Right ventricle myocardium inferior (tissue), 1 donor: ENCODE measurements at regions of chr16 and their contacts with region 1.

Region 1: DNA sequence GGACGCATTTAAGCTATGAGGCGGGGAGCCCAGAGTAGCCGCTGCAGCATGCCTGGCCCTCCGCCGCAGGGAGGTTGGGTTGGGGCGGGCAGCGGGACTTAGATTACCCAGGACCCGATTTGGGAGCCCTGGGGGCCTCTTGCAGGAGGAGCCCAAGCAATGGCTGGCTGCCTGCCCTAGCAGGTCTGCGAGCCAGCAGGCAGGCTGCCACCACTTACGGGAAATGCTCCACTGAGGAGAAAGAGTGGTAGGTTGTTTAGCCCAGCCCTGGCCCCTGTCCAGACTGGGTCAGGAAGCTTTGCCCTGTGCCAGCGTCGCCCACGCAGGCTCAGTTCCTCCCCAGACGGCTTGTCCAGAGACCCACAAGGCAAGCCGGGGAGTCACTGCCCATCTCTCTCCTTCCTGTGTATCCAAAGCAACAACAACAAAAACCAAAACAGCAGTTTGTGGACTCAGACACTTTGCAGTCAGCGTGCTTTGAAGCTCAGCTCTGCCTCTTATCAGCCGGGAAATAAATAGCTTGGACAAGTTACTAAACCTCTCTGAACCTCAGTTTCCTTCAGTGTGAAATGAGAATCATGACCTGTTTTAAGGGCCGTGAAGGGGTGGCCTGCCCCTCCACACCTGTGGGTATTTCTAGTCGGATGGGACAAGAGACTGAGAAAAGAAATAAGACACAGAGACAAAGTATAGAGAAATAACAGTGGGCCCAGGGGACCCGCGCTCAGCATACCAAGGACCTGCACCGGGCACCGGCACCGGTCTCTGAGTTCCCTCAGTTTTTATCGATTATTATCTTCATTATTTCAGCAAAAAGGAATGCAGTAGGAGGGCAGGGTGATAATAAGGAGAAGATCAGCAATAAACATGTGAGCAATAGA is 10.5 kb upstream of the TVP23A start:
- DNase-seq: peak; percentile 96
- ATAC-seq: peak; percentile 84

Region 2: GRCh38 chr16:9372934-9373890 is 1455.9 kb before region 1 on chr16:
- intact Hi-C with region 1: loop called (anchors 10 kb)
- DNase-seq: no peak
- ATAC-seq: no peak

Region 3: DNA sequence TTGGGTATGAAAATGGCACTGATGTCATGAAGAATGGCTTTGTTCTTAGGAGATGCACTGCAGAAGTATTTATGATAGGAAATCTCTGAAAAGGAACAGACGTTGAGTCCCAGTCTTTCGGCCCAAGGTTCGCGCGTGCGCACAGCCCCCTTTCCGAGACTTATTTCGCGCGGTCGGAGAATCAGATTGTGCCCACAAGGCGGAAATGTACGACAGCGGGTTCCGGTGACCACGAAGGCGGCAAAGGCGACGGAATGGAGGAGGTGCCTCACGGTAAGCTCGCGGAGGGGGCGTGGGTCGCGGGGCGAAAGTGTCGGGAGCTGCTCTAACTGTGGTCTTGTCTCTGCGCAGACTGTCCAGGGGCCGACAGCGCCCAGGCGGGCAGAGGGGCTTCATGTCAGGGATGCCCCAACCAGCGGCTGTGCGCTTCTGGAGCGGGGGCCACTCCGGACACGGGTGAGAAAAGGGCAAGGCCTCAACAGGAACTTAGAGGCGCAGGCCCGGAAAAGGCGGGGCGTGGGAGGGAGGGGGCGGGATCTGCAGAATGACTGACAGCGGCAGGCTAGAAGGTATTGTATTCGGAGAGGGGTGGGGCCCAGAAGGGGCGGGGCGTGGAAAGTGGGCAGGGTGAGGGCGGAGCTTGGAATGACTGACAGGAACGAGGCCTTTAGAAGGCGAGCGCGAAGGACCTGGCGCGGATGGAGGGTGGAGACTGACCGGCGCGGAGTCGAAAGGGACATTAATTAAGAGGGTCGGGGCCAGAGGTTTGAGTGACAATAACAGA is 85.3 kb before region 1 on chr16 and contains the start of gene NUBP1:
- intact Hi-C with region 1: loop called (anchors 1 kb)
- DNase-seq: peak; percentile 99
- ATAC-seq: peak; percentile 97
- total RNA-seq, gene NUBP1: 50.4 TPM

Region 4: GRCh38 chr16:10770907-10771306 is 58.2 kb before region 1 on chr16:
- intact Hi-C with region 1: loop called (anchors 5 kb)
- DNase-seq: no peak
- ATAC-seq: no peak

Region 5: DNA sequence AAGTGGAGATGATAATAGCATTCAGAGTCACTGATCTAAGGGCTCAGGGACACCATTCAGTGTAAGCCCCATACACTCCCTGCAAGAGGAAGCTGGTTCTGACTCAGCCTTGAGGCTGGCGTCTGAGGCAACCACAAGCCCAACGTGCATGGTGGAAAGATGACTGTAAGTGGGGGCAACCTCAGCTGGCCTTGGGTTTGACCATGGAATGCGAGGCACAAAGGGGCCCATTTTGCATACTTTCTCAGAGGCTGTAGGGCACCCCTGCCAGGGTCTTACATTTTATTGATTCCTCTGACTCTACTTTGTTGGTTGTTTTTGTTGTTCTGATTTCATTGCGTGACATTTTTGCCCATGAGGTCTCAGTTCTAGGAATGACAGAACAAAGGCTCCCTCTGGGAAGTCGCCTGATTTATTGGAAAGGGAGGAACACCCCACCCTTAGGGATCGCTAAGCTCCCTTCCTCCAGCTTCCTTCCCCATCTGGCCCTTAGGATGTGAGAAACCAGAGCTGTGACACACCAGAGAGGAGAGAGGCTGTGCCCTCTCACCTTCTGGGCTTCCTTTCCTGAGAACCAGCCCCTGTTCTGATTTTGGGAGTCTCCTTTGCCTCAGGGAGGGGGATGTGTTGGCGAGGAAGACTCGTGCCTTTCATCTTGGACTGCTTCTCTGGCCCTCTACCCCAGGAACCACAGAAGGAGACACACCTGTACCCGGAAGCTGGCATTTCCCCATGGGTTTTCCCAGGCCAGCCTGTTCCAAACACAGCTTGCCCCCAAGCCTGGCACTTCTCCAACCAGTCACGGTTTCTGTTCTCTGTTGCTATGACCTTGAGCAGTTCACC is 42.3 kb after region 1 on chr16:
- intact Hi-C with region 1: loop called (anchors 2 kb)
- DNase-seq: peak; percentile 84
- ATAC-seq: peak; percentile 51

Region 6: GRCh38 chr16:10885246-10885645 is 56.2 kb after region 1 on chr16:
- intact Hi-C with region 1: no loop called
- DNase-seq: no peak
- ATAC-seq: no peak

Region 7: DNA sequence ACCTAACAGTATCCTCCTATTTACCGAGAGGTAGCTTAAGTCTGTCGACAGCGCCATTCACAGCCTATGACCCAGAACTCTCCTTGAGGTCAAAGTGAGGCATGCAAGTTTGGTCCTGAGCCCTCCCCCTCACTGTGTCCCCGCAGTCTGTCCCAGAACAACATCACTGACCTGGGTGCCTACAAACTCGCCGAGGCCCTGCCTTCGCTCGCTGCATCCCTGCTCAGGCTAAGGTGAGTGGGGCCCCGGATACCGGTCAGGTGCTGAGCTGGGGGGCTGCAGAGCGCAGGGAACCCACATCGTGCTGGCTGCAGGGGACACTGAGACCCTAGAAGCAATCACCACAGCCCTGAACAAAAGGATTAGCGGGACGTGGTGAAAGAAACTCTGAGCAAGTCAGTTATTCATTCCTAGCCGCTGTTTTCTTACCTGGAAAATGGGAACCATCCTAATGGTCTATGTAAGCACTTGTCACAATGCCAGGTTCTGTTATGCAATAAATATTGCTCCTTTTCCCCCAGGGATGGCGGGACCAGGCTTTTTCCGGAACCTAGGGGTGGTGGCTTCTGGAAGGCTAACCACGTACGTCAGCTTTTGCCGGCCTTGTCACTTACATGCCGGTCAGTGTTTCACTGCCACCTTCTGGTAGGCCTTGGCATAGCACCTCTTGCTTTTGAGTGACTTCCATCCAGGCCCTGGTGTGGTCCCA is 89.4 kb after region 1 on chr16:
- intact Hi-C with region 1: loop called (anchors 2 kb)
- DNase-seq: peak; percentile 94
- ATAC-seq: peak; percentile 81